Ascending aorta (tissue), 2 donors: ENCODE measurements at regions of chr3 and their contacts with region 1.

Region 1: GRCh38 chr3:146544002-146544928 is at the start of gene PLSCR1:
- DNase-seq: peak; percentile 91 to 98
- H3K4me3 ChIP-seq: peak within 1 kb of the TSS; percentile 80 to 92
- H3K27ac ChIP-seq: peak within 1 kb of the TSS; percentile 98
- H3K4me1 ChIP-seq: peaks cover 0 to 4% of the 10 kb centered on the region in 2 donors
- H3K27me3 ChIP-seq: no peaks in the 10 kb centered on the region
- CTCF ChIP-seq: peak in 1 of 3 experiments; percentile 4
- total RNA-seq, gene PLSCR1: 62.2 TPM

Region 2: GRCh38 chr3:146404436-146404835 is 139.8 kb before region 1 on chr3:
- intact Hi-C with region 1: no loop called
- DNase-seq: no peak
- H3K4me3 ChIP-seq: no peak overlapping the region
- H3K27ac ChIP-seq: no peak overlapping the region
- H3K4me1 ChIP-seq: no peaks in the 10 kb centered on the region
- H3K27me3 ChIP-seq: no peaks in the 10 kb centered on the region
- CTCF ChIP-seq: no peak

Region 3: DNA sequence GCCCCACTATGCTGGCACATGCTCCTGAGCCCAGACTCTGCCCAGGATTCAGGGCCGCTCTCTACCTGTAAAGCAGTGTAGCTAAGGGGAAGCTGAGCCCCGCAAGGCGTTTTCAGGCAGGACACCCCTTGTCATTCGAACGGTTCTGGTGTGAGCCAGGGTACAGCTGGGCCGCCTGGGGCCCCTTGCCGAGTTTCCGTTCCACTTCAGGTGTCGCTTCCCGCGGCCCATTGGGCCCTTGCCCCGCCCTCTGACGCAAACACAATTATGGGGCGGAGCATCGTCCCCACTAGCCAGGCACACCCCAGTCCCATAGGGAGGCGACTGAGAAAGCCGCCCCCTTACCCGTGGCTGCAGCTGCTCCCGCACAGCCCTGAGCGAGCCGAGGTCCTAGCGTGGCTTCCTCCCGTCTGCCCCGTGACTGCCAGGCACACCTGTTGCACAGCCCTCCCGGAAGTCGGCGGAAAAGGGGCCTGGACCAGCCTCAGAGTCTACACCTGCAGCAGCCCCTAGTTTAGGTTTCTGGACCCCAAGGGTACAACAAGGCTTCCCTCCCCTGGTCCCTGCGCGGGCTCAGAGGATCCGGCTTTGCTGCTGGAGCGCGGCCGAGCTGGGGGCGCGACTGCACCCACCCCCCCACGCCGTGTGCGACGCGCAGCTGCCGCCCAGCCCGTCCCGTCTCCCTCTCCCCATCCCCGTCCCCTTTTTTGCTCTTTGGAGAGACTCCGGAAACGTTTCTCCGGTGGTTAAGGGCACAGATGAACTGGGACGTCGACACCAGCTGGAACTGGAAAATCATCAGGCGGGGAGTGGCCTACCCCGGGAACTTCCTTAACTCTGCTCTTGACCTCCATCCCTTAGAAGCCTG is 74.9 kb before region 1 on chr3 and contains the start of gene PLSCR2:
- intact Hi-C with region 1: loop called (anchors 2 kb)
- DNase-seq: peak; percentile 17 to 82
- H3K4me3 ChIP-seq: peak within 1 kb of the TSS; percentile 69 to 72
- H3K27ac ChIP-seq: peak within 1 kb of the TSS; percentile 53 to 73
- H3K4me1 ChIP-seq: no peaks in the 10 kb centered on the region
- H3K27me3 ChIP-seq: no peaks in the 10 kb centered on the region
- CTCF ChIP-seq: no peak
- total RNA-seq, gene PLSCR2: not detected

Region 4: DNA sequence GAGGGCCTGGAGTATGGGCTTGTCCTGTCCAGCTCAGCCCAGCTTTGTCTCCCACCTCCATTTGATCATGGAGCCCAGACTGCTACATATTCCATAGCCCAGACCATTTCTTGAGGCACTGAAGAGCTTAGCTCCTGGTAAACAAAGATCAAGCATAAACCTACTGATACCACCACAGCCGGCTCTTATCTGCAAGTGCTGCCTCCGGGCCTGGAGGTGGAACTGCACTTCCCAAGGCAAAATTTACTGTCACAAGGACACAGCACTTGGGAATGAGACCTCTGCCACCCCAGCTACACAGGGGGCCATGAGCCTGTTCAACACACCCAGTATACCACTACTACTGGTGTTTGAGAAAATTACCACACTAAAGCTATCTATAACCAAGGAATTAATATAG is 114.6 kb after region 1 on chr3:
- intact Hi-C with region 1: no loop called
- DNase-seq: no peak
- H3K4me3 ChIP-seq: no peak overlapping the region
- H3K27ac ChIP-seq: no peak overlapping the region
- H3K4me1 ChIP-seq: no peaks in the 10 kb centered on the region
- H3K27me3 ChIP-seq: no peaks in the 10 kb centered on the region
- CTCF ChIP-seq: no peak